PC-3 (cell line): ENCODE measurements at regions of chr11 and their contacts with region 1.

Region 1: GRCh38 chr11:35305670-35306382 is 113.5 kb downstream of the SLC1A2 start:
- DNase-seq: peak; percentile 55
- ATAC-seq: peak; percentile 88
- H3K4me3 ChIP-seq: no peak overlapping the region
- H3K27ac ChIP-seq: no peak overlapping the region
- H3K4me1 ChIP-seq: peaks cover 21% of the 10 kb centered on the region
- H3K27me3 ChIP-seq: no peaks in the 10 kb centered on the region
- CTCF ChIP-seq: peak; percentile 67

Region 2: DNA sequence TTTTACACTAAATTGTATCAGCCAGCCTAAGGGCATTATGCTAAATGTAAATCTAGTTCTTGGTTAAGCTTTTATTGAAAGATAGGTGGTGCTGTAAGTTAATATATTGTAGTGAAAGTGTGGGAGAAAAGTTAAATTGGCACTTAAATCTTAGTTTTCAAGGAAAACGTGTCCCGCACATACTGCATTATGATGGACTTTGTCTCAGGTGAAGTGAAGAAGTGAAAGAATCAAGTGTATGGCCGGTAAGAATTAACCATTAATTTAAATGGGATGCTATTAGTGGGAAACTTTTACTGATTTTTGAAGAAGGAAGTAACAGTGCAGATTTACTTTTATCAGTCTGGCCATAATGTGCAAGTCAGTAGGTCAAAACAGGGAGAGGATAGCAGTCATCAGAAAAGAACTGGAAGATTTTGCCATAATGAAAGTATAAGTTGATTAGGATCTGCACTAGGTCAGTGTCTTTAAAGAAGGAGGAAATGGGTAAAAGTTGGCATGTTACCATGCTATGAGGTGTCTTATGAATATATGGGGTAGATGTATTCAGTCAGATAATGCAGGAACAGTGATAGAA is 307.8 kb before region 1 on chr11:
- CTCF ChIA-PET with region 1: no interaction called
- POLR2A ChIA-PET with region 1: no interaction called
- intact Hi-C with region 1: loop called (anchors 5 kb)
- DNase-seq: peak; percentile 71
- ATAC-seq: peak; percentile 74
- H3K4me3 ChIP-seq: peak overlapping the region; percentile 5; the same call in 1 of the 2 replicates
- H3K27ac ChIP-seq: peak overlapping the region; percentile 79
- H3K4me1 ChIP-seq: peaks cover 20% of the 10 kb centered on the region
- H3K27me3 ChIP-seq: no peaks in the 10 kb centered on the region
- CTCF ChIP-seq: peak; percentile 85

Region 3: DNA sequence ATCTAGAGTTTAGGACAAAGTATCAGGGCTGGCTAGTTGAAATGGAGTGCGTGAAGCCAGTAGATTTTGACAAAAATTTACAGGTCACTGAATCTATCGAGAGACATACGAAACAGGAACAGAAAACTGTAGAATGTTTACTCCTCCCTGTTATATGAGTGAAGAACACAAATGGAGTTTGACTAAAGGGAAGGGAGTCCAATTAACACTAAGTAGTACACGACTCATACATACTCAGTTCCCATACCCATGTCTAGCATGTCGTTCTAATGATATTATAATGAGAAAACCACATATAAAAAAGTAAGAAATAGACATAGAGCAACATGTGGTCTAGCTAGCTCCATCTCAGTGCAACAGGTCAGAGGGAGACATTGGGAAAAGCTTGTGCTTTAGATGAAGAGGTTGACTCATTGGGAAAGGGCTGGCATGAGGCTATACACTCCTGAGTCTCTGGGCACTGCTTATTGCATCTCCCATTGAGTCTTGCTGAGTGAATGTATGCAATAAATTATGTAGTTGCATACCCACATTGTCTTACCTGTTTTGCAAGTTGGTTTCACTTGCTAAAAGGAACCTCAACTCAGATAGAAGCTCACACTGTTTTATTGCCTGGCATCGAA is 123.4 kb before region 1 on chr11:
- CTCF ChIA-PET with region 1: no interaction called
- POLR2A ChIA-PET with region 1: no interaction called
- intact Hi-C with region 1: no loop called
- DNase-seq: peak; percentile 46
- ATAC-seq: no peak
- H3K4me3 ChIP-seq: no peak overlapping the region
- H3K27ac ChIP-seq: no peak overlapping the region
- H3K4me1 ChIP-seq: peaks cover 44% of the 10 kb centered on the region
- H3K27me3 ChIP-seq: no peaks in the 10 kb centered on the region
- CTCF ChIP-seq: no peak

Region 4: GRCh38 chr11:35511666-35512065 is 205.8 kb after region 1 on chr11:
- CTCF ChIA-PET with region 1: no interaction called
- POLR2A ChIA-PET with region 1: no interaction called
- intact Hi-C with region 1: no loop called
- DNase-seq: peak; percentile 72
- ATAC-seq: peak; percentile 76
- H3K4me3 ChIP-seq: no peak overlapping the region
- H3K27ac ChIP-seq: no peak overlapping the region
- H3K4me1 ChIP-seq: peaks cover 11% of the 10 kb centered on the region
- H3K27me3 ChIP-seq: no peaks in the 10 kb centered on the region
- CTCF ChIP-seq: no peak